Posterior vena cava (tissue), 2 donors: ENCODE measurements at regions of chr4 and their contacts with region 1.

Region 1: DNA sequence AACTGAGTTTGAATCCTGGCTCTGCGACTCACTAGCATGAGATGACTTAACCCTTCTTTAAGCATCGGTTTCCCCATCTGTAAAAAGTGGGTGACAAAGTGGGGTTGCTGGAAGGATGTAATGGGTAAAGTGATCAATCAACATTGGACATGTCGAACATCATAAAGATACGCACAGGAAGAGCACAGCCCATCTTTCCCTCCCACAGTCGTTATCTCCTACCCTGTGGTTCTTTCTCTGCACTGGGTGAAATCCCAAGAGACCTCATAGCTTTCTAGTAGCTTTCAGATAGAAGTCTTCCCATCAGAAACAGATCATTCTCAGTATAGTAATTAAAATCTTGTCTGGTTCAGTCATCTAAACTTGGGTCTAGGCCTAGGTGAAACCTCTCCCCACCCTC is 216.5 kb downstream of the CBR4 start:
- DNase-seq: no peak

Region 2: GRCh38 chr4:168771251-168771650 is 22.3 kb before region 1 on chr4:
- intact Hi-C with region 1: loop called in 1 of 2 experiments (anchors 1 kb)
- DNase-seq: no peak